ENCODE measurements at regions of chr11 and their contacts with region 1.

Region 1: GRCh38 chr11:44538375-44539054 is 26.9 kb upstream of the CD82 start:
- DNase-seq: peak; percentile 89

Region 2: DNA sequence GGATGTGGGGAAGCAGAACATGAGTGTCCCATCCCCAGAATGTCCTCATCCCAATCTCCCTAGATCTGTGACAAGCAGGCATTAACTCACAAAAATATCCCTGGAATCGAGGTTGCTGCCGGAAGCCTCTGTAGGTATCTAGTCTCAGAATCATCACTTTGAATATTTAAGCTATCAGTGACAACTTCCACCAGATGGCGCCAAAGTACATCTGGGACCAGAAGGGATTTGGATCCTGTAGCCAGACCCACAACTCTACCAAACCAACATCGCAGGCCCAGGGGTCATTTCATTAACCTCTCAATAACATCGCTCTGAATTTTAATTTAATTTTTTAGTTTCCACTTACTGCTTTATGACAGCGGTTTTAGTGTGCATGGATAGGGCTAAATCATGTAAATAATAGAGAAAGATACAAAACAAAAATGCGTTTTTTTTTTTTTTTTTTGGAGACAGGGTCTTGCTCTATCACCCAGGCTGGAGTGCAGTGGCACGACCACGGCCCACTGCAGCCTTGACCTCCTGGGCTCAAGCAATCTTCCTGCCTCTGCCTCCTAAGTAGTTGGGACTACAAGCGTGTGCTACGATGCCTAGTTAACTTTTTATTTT is 444.2 kb before region 1 on chr11:
- intact Hi-C with region 1: loop called (anchors 1 kb)
- DNase-seq: peak; percentile 86

Region 3: DNA sequence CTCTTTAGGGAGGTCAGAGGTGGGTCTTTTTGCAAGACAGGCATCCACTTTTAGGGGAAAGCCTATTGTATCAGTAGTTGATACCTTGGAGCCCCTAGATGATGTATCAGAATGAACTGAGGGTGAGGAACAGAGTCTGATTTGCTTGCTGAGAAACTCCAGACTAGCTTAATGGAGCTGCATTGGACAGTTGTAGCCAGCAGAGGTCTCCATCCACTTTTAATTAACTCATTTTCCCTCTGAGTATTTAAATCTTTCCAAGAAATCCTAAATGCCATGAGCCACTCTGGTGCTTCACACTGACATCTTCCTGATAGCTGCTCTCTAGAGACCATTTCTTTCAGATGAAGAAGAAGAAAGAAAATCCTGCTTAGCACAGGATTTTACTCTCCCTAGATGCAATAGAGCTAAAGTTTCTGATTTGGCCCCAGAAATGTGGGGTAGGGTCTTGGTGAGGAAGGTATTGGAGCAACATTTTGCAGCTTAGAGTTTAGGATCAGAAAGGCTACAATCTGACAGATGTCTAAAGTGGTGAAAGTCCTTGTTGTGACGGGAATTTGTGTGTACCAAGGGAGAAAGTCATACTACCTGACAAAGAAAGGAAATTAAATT is 405.1 kb before region 1 on chr11:
- intact Hi-C with region 1: loop called (anchors 5 kb)
- DNase-seq: no peak

Measured in cardiac septum (tissue), 1 donor.